ENCODE measurements at regions of chrX and their contacts with region 1.

Region 1: DNA sequence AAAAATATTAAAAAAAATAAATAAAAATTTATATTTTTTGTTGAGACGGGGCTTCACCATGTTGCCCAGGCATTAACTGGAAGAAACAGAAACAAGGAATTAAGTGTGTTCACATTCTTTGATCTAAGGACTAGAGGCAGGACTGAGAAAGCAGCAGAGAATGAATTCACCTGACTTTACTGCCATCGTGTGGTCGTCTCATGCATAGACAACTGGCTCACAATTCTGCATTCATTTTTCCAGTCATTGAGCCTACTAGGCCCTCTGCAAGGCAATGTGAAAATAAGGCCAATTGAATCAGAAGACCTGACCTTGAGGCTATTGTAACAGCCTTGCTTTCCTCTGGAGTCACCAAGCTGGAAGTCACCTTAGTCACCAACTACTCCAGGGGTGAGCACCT is 37.4 kb downstream of the LHFPL1 start:
- DNase-seq: peak in 5 of 10 donors; percentile 9 to 35 (median 15)

Region 2: GRCh38 chrX:111869639-111870034 is 772.7 kb before region 1 on chrX:
- intact Hi-C with region 1: loop called (anchors 5 kb)
- DNase-seq: peak in 3 of 10 donors; percentile 1 to 9 (median 8)

Region 3: GRCh38 chrX:112043997-112044396 is 598.4 kb before region 1 on chrX:
- intact Hi-C with region 1: loop called (anchors 10 kb)
- DNase-seq: no peak

Region 4: GRCh38 chrX:112746812-112747595 is 104.7 kb after region 1 on chrX:
- intact Hi-C with region 1: no loop called
- DNase-seq: no peak

Measured in posterior cingulate gyrus (tissue), 11 donors.